Activated CD4-positive, alpha-beta T cell treated with anti-CD3 and anti-CD28 coated beads for 36 hours (primary cell): ENCODE measurements at regions of chr10 and their contacts with region 1.

Region 1: GRCh38 chr10:99620713-99621453 is 644 bp upstream of the SLC25A28 start:
- DNase-seq: peak; percentile 94
- ATAC-seq: peak; percentile 89
- H3K4me3 Mint-ChIP-seq: peak overlapping the region; percentile 96
- H3K27ac Mint-ChIP-seq: peak overlapping the region; percentile 96
- H3K4me1 Mint-ChIP-seq: peaks cover 39% of the 10 kb centered on the region
- H3K27me3 Mint-ChIP-seq: no peaks in the 10 kb centered on the region

Region 2: GRCh38 chr10:98134431-98135221 is 1486.3 kb before region 1 on chr10 and contains the start of gene R3HCC1L:
- CTCF ChIA-PET with region 1: no interaction called
- POLR2A ChIA-PET with region 1: no interaction called
- intact Hi-C with region 1: loop called in 1 of 2 experiments (anchors 1 kb)
- DNase-seq: peak; percentile 97
- ATAC-seq: peak; percentile 95
- H3K4me3 Mint-ChIP-seq: peak within 1 kb of the TSS; percentile 86
- H3K27ac Mint-ChIP-seq: peak within 1 kb of the TSS; percentile 93
- H3K4me1 Mint-ChIP-seq: peaks cover 44% of the 10 kb centered on the region
- H3K27me3 Mint-ChIP-seq: no peaks in the 10 kb centered on the region
- total RNA-seq, gene R3HCC1L: 13.5 to 16.8 TPM

Region 3: DNA sequence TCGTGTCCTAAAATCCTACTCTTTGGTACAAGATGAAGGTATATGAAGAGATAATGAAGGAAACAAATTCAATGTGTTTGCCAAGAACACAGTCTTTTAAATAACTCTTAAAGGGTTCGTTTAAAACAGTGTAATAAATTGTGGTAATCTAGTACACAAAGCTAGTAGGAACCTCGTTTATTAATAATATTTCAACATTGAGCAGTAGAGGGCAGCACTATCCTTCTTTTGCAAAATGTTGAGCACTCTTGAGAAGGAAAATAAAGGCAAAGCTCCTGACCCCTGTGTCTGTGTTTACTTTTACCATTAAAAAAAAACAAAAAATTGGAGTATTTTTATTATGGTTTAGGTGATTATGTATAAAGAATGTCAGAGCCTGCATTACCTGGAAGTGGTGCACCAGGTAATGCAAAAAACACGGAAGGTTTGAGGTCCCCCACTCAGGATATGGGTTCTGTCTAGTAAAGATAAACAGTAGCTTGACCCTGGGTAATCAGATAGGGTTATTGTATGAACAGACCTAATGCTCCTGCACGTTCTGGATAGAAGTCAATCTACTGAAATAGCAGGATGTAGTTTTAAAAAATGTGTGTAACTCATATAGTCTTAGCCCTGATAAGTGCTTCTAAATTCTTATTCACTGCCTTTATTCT is 184.8 kb before region 1 on chr10:
- CTCF ChIA-PET with region 1: interaction called, 26 read pairs
- POLR2A ChIA-PET with region 1: interaction called, 3 read pairs
- intact Hi-C with region 1: no loop called
- DNase-seq: no peak
- ATAC-seq: peak; percentile 60
- H3K4me3 Mint-ChIP-seq: no peak overlapping the region
- H3K27ac Mint-ChIP-seq: no peak overlapping the region
- H3K4me1 Mint-ChIP-seq: peaks cover 14% of the 10 kb centered on the region
- H3K27me3 Mint-ChIP-seq: no peaks in the 10 kb centered on the region

Region 4: DNA sequence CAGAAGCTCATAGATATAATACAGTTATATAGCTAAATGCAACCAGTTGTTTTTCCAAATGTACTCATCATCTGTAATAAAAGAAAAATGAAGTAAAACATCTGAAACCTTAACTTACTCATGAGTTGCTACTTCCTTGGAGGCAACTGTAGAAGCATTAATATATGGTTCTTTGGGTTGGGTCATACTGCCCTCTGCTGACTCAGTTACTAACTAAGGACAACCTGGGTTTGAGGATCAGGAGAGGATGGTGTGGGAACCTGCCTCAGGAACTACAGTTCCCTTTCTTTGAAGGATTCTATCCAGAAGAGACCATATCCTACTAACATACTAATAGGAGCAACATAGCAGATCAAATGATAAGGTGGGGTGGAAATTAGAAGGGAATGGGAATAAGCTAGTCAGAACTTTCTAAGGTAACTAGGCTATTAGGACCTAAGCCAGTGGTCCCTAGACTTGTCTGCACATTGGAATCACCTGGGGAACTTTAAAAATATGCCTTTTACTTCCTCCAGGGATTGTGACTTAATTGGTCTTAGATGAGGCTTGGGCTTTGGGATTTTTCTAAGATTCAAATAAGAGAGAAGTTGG is 90.3 kb after region 1 on chr10:
- CTCF ChIA-PET with region 1: interaction called, 3 read pairs
- POLR2A ChIA-PET with region 1: no interaction called
- intact Hi-C with region 1: loop called (anchors 1 to 2 kb)
- DNase-seq: peak; percentile 57
- ATAC-seq: peak; percentile 63
- H3K4me3 Mint-ChIP-seq: no peak overlapping the region
- H3K27ac Mint-ChIP-seq: no peak overlapping the region
- H3K4me1 Mint-ChIP-seq: peaks cover 15% of the 10 kb centered on the region
- H3K27me3 Mint-ChIP-seq: no peaks in the 10 kb centered on the region

Region 5: DNA sequence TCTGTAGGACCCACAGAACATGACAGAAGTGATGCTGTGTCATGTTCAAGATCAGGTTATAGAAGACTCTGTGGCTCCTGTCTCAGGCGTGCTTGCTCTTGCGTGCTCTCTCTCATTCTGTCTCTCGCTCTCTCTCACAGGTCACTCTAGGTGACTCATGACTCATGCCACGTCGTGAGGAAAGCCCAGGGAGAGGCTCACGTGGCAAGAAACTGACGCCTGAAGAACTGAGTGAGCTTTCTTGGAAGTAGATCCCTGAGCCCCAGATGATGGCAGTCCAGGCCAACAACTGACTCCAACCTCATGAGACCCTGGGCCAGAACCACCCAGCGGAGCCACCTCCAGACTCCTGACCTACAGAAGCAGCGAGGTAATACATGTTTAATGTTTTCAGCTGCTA is 285.6 kb after region 1 on chr10:
- CTCF ChIA-PET with region 1: no interaction called
- POLR2A ChIA-PET with region 1: no interaction called
- intact Hi-C with region 1: no loop called
- DNase-seq: no peak
- ATAC-seq: no peak
- H3K4me3 Mint-ChIP-seq: no peak overlapping the region
- H3K27ac Mint-ChIP-seq: no peak overlapping the region
- H3K4me1 Mint-ChIP-seq: no peaks in the 10 kb centered on the region
- H3K27me3 Mint-ChIP-seq: no peaks in the 10 kb centered on the region